AG04450 (cell line): ENCODE measurements at regions of chr2 and their contacts with region 1.

Region 1: GRCh38 chr2:30231212-30231995 is at the start of gene LBH:
- DNase-seq: peak; percentile 85
- H3K4me3 ChIP-seq: peak within 1 kb of the TSS; percentile 89
- H3K27ac ChIP-seq: peak within 1 kb of the TSS; percentile 65
- H3K27me3 ChIP-seq: no peaks in the 10 kb centered on the region
- CTCF ChIP-seq: no peak
- polyA plus RNA-seq, gene LBH: 381 and 463 TPM in 2 replicates

Region 2: DNA sequence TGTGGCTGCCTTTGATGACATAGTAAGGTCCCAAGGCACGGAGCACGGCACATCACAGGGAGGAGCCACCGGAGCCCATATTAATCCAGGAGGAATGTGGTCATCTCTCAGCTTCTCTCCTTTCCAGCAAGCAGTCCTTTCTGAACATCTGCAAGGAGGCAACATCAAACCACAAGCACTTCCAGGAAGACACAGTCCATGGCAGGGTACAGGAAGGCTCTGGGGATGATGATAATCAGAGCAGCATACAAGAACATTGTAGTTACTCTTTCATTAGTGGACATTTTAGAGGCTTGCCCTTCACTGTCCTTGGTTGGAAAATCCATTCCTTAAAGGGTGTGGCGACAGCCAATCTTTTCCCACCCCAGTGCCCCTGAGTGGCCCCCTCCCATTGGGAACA is 53.4 kb before region 1 on chr2:
- CTCF ChIA-PET with region 1: no interaction called
- POLR2A ChIA-PET with region 1: no interaction called
- DNase-seq: no peak
- H3K4me3 ChIP-seq: no peak overlapping the region
- H3K27ac ChIP-seq: no peak overlapping the region
- H3K27me3 ChIP-seq: peaks cover 4% of the 10 kb centered on the region
- CTCF ChIP-seq: no peak

Region 3: GRCh38 chr2:30208452-30208851 is 23.0 kb before region 1 on chr2:
- CTCF ChIA-PET with region 1: interaction called, 33 read pairs
- POLR2A ChIA-PET with region 1: interaction called, 25 read pairs
- DNase-seq: peak; percentile 73
- H3K4me3 ChIP-seq: no peak overlapping the region
- H3K27ac ChIP-seq: no peak overlapping the region
- H3K27me3 ChIP-seq: peaks cover 13% of the 10 kb centered on the region
- CTCF ChIP-seq: peak; percentile 96

Region 4: DNA sequence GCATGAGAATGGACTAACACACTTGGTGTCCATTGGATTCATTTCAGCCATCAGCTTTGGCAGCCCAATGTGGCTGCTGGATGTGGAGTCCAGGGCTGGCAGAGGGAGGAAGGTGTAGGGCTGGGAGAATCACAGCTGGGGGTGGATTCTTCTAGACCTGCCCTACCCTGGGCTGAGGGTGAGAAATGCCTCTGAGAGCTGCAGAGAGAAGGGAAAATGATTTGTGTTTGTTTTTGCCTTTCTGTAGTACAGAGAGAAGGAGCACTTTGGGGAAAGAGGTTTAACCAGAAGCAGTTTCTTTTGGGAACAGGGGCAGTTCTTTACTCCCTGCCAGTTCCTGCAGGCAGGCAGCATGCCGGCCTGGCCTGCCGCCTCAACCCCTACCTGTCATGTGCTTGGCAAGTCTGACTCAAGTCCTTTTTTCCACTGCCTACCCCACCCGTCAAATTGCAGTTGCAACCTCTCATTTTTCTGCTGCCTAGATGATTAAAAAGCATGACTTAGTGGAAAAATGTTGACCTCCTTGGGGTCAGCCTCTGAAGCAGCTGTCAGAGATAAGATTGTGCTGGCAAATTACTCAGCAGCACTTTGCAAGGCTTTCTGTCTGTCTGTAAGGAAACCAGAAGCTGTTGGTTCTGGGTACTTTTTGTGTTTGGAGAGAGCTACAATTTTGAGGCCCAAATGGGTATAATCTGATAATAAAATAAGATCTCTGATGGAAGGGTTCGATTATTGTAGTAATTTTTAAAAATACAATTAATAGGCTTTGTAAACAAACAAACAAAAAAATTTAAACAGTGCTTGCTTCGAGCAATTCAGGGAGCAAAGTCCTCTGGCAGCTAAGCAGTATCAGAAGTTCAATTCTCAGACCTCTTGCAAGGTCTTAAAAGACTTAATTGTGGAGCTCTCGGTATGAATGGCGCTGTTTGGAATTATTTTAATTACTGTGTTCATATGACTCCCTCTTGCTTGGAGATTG is 21.6 kb after region 1 on chr2:
- CTCF ChIA-PET with region 1: no interaction called
- POLR2A ChIA-PET with region 1: interaction called, 22 read pairs
- DNase-seq: peak; percentile 41
- H3K4me3 ChIP-seq: no peak overlapping the region
- H3K27ac ChIP-seq: peak overlapping the region; percentile 47
- H3K27me3 ChIP-seq: no peaks in the 10 kb centered on the region
- CTCF ChIP-seq: no peak

Region 5: GRCh38 chr2:30287857-30288513 is 56.6 kb after region 1 on chr2:
- CTCF ChIA-PET with region 1: no interaction called
- POLR2A ChIA-PET with region 1: interaction called, 42 read pairs
- DNase-seq: no peak
- H3K4me3 ChIP-seq: no peak overlapping the region
- H3K27ac ChIP-seq: no peak overlapping the region
- H3K27me3 ChIP-seq: no peaks in the 10 kb centered on the region
- CTCF ChIP-seq: no peak

Region 6: GRCh38 chr2:30300456-30301221 is 69.2 kb after region 1 on chr2:
- CTCF ChIA-PET with region 1: no interaction called
- POLR2A ChIA-PET with region 1: interaction called, 81 read pairs
- DNase-seq: peak; percentile 96
- H3K4me3 ChIP-seq: no peak overlapping the region
- H3K27ac ChIP-seq: peak overlapping the region; percentile 99
- H3K27me3 ChIP-seq: no peaks in the 10 kb centered on the region
- CTCF ChIP-seq: no peak

Region 7: GRCh38 chr2:30481323-30481800 is 250.0 kb after region 1 on chr2:
- CTCF ChIA-PET with region 1: no interaction called
- POLR2A ChIA-PET with region 1: interaction called, 12 read pairs
- DNase-seq: no peak
- H3K4me3 ChIP-seq: no peak overlapping the region
- H3K27ac ChIP-seq: no peak overlapping the region
- H3K27me3 ChIP-seq: no peaks in the 10 kb centered on the region
- CTCF ChIP-seq: no peak